ENCODE measurements at regions of chr1 and their contacts with region 1.

Region 1: DNA sequence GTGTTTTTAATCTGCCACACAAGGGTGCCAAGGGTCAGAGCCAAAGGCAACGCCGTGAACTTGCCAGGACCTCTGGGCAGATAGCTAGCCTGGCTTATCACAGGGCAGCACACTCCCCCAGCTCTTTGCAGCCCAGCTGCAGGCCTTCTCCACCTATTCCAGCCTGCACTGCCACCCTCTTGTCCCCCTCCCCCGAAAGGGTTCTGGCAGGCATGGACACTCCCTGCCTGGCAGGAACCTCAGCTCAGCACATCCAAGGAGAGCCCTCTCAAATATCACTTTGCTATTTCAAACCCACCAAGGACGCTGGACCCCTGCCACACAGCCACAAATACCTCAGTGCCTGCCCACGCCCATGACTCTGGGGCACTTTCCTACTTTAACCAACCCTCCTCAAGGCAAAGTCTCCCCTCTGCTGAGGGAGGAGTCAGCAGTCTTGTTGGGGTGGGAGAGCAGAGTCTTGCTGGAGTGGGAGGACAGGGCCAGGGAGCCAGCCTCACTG is 9.1 kb downstream of the SSBP3 start:
- DNase-seq: no peak
- H3K4me3 ChIP-seq: no peak overlapping the region
- H3K27ac ChIP-seq: peak overlapping the region; percentile 26 to 48
- H3K4me1 ChIP-seq: peaks cover 0 to 62% (median 30%) of the 10 kb centered on the region in 4 donors
- H3K27me3 ChIP-seq: no peaks in the 10 kb centered on the region
- CTCF ChIP-seq: no peak

Region 2: GRCh38 chr1:54323324-54323739 is 73.8 kb before region 1 on chr1:
- intact Hi-C with region 1: loop called (anchors 10 kb)
- DNase-seq: no peak
- H3K4me3 ChIP-seq: no peak overlapping the region
- H3K27ac ChIP-seq: peak overlapping the region in 1 of 2 donors; percentile 39
- H3K4me1 ChIP-seq: peaks cover 0 to 71% (median 51%) of the 10 kb centered on the region in 4 donors
- H3K27me3 ChIP-seq: no peaks in the 10 kb centered on the region
- CTCF ChIP-seq: no peak